Left ventricle myocardium inferior (tissue), 1 donor: ENCODE measurements at regions of chr1 and their contacts with region 1.

Region 1: GRCh38 chr1:186985889-186986491 is 157.2 kb downstream of the PLA2G4A start:
- DNase-seq: no peak
- H3K4me3 ChIP-seq: no peak overlapping the region
- H3K27ac ChIP-seq: no peak overlapping the region
- H3K4me1 ChIP-seq: no peaks in the 10 kb centered on the region
- H3K27me3 ChIP-seq: no peaks in the 10 kb centered on the region
- CTCF ChIP-seq: peak; percentile 77

Region 2: GRCh38 chr1:186482661-186483255 is 503.2 kb before region 1 on chr1:
- intact Hi-C with region 1: loop called (anchors 10 kb)
- DNase-seq: peak; percentile 33
- H3K4me3 ChIP-seq: no peak overlapping the region
- H3K27ac ChIP-seq: no peak overlapping the region
- H3K4me1 ChIP-seq: no peaks in the 10 kb centered on the region
- H3K27me3 ChIP-seq: no peaks in the 10 kb centered on the region
- CTCF ChIP-seq: peak; percentile 88

Region 3: GRCh38 chr1:186605762-186606350 is 380.1 kb before region 1 on chr1:
- intact Hi-C with region 1: loop called (anchors 5 kb)
- DNase-seq: no peak
- H3K4me3 ChIP-seq: no peak overlapping the region
- H3K27ac ChIP-seq: no peak overlapping the region
- H3K4me1 ChIP-seq: no peaks in the 10 kb centered on the region
- H3K27me3 ChIP-seq: no peaks in the 10 kb centered on the region
- CTCF ChIP-seq: peak; percentile 76

Region 4: DNA sequence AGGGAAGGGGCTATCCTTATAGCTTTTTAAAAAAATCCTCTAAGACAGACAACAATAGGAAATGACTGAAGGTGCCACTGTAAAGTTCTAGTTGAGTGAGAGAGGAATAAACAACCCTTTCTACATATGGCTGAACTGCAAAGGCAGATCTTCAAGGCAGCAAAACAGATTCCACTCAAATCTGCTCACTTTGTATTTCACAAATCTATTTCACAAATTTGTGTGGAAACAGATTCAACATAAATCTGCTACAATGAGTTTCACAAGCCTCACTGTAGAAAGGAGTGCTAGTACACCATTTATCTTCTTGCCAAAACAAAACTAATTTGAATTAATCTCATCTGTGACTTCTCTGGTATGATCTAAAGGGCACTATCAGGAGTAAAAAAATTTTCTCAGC is 294.0 kb after region 1 on chr1:
- intact Hi-C with region 1: no loop called
- DNase-seq: no peak
- H3K4me3 ChIP-seq: no peak overlapping the region
- H3K27ac ChIP-seq: no peak overlapping the region
- H3K4me1 ChIP-seq: no peaks in the 10 kb centered on the region
- H3K27me3 ChIP-seq: no peaks in the 10 kb centered on the region
- CTCF ChIP-seq: no peak